MCF 10A (cell line): ENCODE measurements at regions of chr12 and their contacts with region 1.

Region 1: GRCh38 chr12:6592087-6592486 is 15.1 kb downstream of the CHD4 start:
- DNase-seq: no peak
- H3K4me3 Mint-ChIP-seq: no peak overlapping the region
- H3K27ac Mint-ChIP-seq: peak overlapping the region; percentile 25
- H3K4me1 Mint-ChIP-seq: peaks cover 4% of the 10 kb centered on the region
- H3K27me3 Mint-ChIP-seq: no peaks in the 10 kb centered on the region
- CTCF ChIP-seq: no peak

Region 2: GRCh38 chr12:6607751-6608591 is 15.9 kb after region 1 on chr12:
- CTCF ChIA-PET with region 1: interaction called, 11 read pairs
- POLR2A ChIA-PET with region 1: interaction called, 7 read pairs
- intact Hi-C with region 1: no loop called
- DNase-seq: peak; percentile 92
- H3K4me3 Mint-ChIP-seq: no peak overlapping the region
- H3K27ac Mint-ChIP-seq: no peak overlapping the region
- H3K4me1 Mint-ChIP-seq: peaks cover 39% of the 10 kb centered on the region
- H3K27me3 Mint-ChIP-seq: no peaks in the 10 kb centered on the region
- CTCF ChIP-seq: no peak

Region 3: DNA sequence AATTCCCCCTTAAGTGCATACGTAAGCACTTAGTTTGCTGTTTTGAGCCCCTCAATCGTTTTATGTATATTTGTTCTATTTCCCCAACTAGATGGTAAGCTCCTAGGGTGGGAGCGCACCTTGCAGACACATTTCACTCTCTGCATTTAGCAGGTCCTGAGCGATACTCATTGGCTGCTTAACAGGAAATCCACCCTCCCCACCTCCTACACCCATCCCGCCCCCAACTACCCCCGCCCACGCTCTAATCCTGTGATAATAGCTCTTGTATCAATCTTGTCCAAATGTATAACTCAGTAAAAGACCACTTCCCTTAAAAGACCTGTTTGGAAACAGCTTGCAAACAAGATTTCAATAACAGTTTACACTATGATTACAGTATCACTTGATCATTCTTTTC is 35.5 kb after region 1 on chr12:
- CTCF ChIA-PET with region 1: no interaction called
- POLR2A ChIA-PET with region 1: no interaction called
- intact Hi-C with region 1: no loop called
- DNase-seq: no peak
- H3K4me3 Mint-ChIP-seq: no peak overlapping the region
- H3K27ac Mint-ChIP-seq: no peak overlapping the region
- H3K4me1 Mint-ChIP-seq: peaks cover 6% of the 10 kb centered on the region
- H3K27me3 Mint-ChIP-seq: no peaks in the 10 kb centered on the region
- CTCF ChIP-seq: no peak